Sigmoid colon (tissue), 7 donors: ENCODE measurements at regions of chr5 and their contacts with region 1.

Region 1: DNA sequence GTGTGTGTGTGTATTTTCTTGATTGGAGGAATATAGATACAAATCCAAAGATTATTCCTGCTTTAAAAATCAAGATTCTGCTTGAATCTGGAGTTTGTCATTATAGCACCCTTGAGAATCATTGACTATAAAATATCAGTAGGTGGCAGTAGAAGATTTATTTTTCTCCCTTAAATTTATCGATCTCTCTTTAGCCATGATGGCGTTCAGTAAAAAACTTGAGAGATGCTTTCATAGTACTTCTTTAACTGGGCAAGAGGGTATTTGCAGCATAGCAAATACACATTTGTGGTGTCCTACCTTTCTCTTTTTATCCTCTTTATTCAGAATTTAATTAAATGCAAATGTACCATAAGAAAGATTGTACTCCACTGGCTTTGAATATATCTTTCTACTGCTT is 307.7 kb downstream of the ADGRV1 start:
- DNase-seq: no peak
- H3K4me3 ChIP-seq: no peak overlapping the region
- H3K27ac ChIP-seq: no peak overlapping the region
- H3K4me1 ChIP-seq: peaks cover 0 to 4% (median 0%) of the 10 kb centered on the region in 4 donors
- H3K27me3 ChIP-seq: no peaks in the 10 kb centered on the region
- CTCF ChIP-seq: peak; percentile 17 to 51 (median 32)
- EP300 ChIP-seq: no peak
- POLR2A ChIP-seq: no peak

Region 2: DNA sequence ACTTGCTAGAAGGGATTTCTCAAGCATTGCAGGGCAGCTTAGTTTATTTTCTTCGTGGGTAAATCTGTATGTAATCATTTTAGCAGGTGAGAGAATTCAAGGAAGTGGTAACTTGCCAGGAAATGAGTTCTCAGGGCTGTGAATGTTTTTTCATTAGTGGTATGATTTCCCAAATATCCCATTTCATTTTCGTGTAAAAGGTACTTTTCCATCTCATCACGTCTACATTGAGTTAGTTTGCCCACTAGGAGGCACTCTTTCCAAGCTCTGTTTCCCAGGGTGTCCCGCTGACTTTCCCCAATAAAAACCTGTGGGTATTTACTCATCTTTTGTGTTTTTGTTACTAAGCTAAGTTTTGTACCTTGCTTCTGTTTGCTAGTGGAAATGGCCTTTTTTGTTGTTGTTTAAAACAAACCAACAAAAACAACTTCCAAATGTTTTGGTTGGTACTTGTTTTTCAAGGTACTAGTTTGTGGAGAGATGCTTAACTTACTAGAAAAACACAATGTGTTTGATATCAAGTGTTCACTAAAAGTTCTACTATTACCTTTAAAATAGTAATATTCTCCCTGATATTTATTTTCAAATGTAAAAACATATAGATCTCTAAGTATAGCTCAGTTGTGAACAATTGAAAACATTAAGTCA is 65.8 kb after region 1 on chr5:
- intact Hi-C with region 1: loop called (anchors 5 kb)
- DNase-seq: peak; percentile 75
- H3K4me3 ChIP-seq: no peak overlapping the region
- H3K27ac ChIP-seq: no peak overlapping the region
- H3K4me1 ChIP-seq: peaks cover 0 to 17% (median 11%) of the 10 kb centered on the region in 4 donors
- H3K27me3 ChIP-seq: no peaks in the 10 kb centered on the region
- CTCF ChIP-seq: peak; percentile 71 to 78 (median 76)
- EP300 ChIP-seq: no peak
- POLR2A ChIP-seq: no peak

Region 3: GRCh38 chr5:91419571-91420537 is 553.5 kb after region 1 on chr5:
- intact Hi-C with region 1: loop called (anchors 1 kb)
- DNase-seq: peak; percentile 73
- H3K4me3 ChIP-seq: no peak overlapping the region
- H3K27ac ChIP-seq: no peak overlapping the region
- H3K4me1 ChIP-seq: no peaks in the 10 kb centered on the region
- H3K27me3 ChIP-seq: no peaks in the 10 kb centered on the region
- CTCF ChIP-seq: peak; percentile 48 to 68 (median 54)
- EP300 ChIP-seq: no peak
- POLR2A ChIP-seq: no peak